ENCODE measurements at regions of chr13 and their contacts with region 1.

Region 1: GRCh38 chr13:27533155-27533643 is 82.8 kb upstream of the MTIF3 start:
- DNase-seq: peak; percentile 21 to 94
- H3K4me3 ChIP-seq: no peak overlapping the region
- H3K27ac ChIP-seq: no peak overlapping the region
- H3K4me1 ChIP-seq: no peaks in the 10 kb centered on the region
- H3K27me3 ChIP-seq: no peaks in the 10 kb centered on the region
- CTCF ChIP-seq: peak; percentile 94 to 99 (median 97)
- EP300 ChIP-seq: no peak
- POLR2A ChIP-seq: no peak
- RAD21 ChIP-seq: peak; percentile 76 to 88

Region 2: GRCh38 chr13:27334774-27335435 is 198.3 kb before region 1 on chr13:
- CTCF ChIA-PET with region 1: no interaction called
- POLR2A ChIA-PET with region 1: no interaction called
- DNase-seq: no peak
- H3K4me3 ChIP-seq: no peak overlapping the region
- H3K27ac ChIP-seq: no peak overlapping the region
- H3K4me1 ChIP-seq: peaks cover 7 to 22% (median 11%) of the 10 kb centered on the region in 4 experiments
- H3K27me3 ChIP-seq: peaks cover 0 to 3% (median 1%) of the 10 kb centered on the region in 4 experiments; a peak in 2 of 7 replicates
- CTCF ChIP-seq: no peak
- EP300 ChIP-seq: no peak
- POLR2A ChIP-seq: no peak
- RAD21 ChIP-seq: no peak

Region 3: DNA sequence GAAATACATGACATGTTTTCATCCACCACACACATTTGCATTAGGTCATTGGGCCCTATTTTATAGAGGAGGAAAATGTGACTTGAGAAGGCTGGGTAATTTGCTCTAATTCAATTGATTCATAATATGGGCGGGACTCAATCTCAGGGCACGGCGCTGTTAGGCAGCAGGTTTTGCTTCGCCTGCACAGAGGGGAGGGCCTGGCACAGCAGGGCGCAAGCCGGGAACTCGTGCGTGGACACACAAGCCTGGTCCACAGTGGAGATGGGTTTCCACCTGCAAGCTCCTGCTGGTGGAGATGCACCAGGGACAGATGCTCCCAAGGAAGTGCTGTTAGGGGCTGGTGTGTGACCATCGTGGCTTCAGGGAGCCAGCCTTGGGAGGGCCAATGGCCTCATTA is 24.4 kb before region 1 on chr13:
- CTCF ChIA-PET with region 1: interaction called, 10 read pairs
- POLR2A ChIA-PET with region 1: no interaction called
- DNase-seq: no peak
- H3K4me3 ChIP-seq: no peak overlapping the region
- H3K27ac ChIP-seq: no peak overlapping the region
- H3K4me1 ChIP-seq: no peaks in the 10 kb centered on the region
- H3K27me3 ChIP-seq: no peaks in the 10 kb centered on the region
- CTCF ChIP-seq: no peak
- EP300 ChIP-seq: no peak
- POLR2A ChIP-seq: no peak
- RAD21 ChIP-seq: no peak

Region 4: GRCh38 chr13:27607125-27607524 is 73.9 kb after region 1 on chr13:
- CTCF ChIA-PET with region 1: no interaction called
- POLR2A ChIA-PET with region 1: no interaction called
- DNase-seq: no peak
- H3K4me3 ChIP-seq: no peak overlapping the region
- H3K27ac ChIP-seq: no peak overlapping the region
- H3K4me1 ChIP-seq: peaks cover 0 to 3% (median 1%) of the 10 kb centered on the region in 4 experiments; a peak in 4 of 7 replicates
- H3K27me3 ChIP-seq: no peaks in the 10 kb centered on the region
- CTCF ChIP-seq: no peak
- EP300 ChIP-seq: no peak
- POLR2A ChIP-seq: no peak
- RAD21 ChIP-seq: no peak

Measured in H1 (cell line).